ENCODE measurements at regions of chr5 and their contacts with region 1.

Region 1: GRCh38 chr5:81751009-81751835 is at the start of gene SSBP2:
- DNase-seq: peak; percentile 99 to 100 (median 99)
- ATAC-seq: peak; percentile 98
- H3K4me3 ChIP-seq: peak within 1 kb of the TSS; percentile 91
- H3K27ac ChIP-seq: peak within 1 kb of the TSS; percentile 99
- H3K4me1 ChIP-seq: peaks cover 2% of the 10 kb centered on the region
- H3K27me3 ChIP-seq: no peaks in the 10 kb centered on the region
- total RNA-seq, gene SSBP2: 50.6 to 57.8 (median 54.1) TPM

Region 2: DNA sequence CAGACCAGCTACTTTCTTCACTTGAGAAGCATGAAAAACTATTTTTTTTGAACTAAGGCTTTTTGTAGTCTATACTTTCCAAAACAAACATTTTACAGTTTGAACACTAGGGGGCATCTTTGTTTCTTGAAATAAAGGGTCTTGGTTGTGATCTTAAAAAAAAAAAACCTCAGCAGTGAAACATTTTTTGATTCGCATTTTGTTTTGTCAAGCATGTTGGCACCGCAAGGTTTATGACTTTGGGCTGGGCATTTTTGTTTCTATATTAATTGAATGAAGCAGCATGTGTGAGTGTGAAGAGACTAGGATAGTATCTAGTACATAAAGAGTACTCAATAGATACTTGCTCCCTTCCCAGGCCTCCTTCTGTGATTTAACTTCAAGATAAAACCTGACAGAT is 325.7 kb before region 1 on chr5:
- intact Hi-C with region 1: loop called in 1 of 4 experiments (anchors 5 kb)
- DNase-seq: no peak
- ATAC-seq: peak; percentile 56 to 67
- H3K4me3 ChIP-seq: no peak overlapping the region
- H3K27ac ChIP-seq: no peak overlapping the region
- H3K4me1 ChIP-seq: no peaks in the 10 kb centered on the region
- H3K27me3 ChIP-seq: no peaks in the 10 kb centered on the region

Region 3: GRCh38 chr5:81506900-81507588 is 244.2 kb before region 1 on chr5:
- intact Hi-C with region 1: loop called in 3 of 4 experiments (anchors 5 to 10 kb)
- DNase-seq: peak in 2 of 3 donors; percentile 36 to 43
- ATAC-seq: peak; percentile 98
- H3K4me3 ChIP-seq: no peak overlapping the region
- H3K27ac ChIP-seq: no peak overlapping the region
- H3K4me1 ChIP-seq: no peaks in the 10 kb centered on the region
- H3K27me3 ChIP-seq: no peaks in the 10 kb centered on the region

Region 4: DNA sequence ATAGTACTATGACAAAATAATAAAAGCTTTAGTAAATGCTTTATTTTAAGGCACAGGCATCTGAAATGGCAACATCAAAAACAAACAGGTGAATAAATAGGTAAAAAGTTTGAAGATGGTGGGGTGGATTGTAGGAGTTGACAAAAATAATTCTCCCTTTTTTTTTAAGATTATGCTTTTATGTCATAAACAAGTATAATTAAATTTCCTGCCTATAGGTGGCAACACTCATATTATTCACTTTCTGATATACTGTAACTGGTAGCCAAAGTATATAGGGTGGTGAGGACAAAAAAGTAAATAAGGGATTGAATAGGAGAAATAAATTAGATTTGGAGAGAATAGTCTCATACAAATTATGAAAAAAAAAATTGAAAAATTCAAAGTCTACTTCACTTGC is 237.2 kb before region 1 on chr5:
- intact Hi-C with region 1: loop called in 3 of 4 experiments (anchors 5 to 10 kb)
- DNase-seq: no peak
- ATAC-seq: no peak
- H3K4me3 ChIP-seq: no peak overlapping the region
- H3K27ac ChIP-seq: no peak overlapping the region
- H3K4me1 ChIP-seq: no peaks in the 10 kb centered on the region
- H3K27me3 ChIP-seq: no peaks in the 10 kb centered on the region

Region 5: DNA sequence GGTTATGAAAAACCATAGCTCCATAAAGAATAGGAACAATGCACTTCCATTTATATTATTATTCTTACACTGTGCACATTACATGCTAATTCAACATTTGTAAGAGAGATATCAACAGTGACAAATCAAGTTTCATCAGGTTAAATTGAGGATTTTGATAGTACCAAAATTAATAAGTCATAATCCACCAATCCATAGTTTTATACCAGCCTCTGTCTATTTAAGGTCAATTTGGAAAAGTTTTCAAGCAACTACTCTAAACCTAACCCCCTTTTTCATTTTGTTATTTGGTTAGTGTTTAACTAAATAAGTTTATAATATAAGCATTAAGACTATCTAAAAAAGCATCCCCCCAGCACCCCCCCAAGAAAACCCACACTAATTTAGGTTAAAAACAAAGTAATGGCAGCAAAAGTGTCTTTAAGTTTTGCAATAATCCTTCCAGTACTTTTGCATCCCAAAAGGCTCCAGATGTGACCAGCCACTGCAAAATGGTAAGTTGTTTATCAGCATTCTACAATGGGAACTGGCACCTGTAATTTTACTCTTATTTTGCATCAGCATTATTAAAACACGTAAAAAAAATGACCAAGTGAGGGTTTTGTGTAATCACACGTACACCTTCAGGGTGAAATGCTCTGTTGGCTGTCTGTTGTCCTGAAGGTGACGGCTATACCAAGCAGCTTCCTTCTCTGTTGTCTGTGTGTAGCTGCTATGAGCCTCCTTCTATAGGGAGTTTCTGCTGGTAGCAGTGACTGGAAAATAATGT is 36.4 kb after region 1 on chr5:
- intact Hi-C with region 1: loop called in 3 of 4 experiments (anchors 2 to 5 kb)
- DNase-seq: peak in 2 of 3 donors; percentile 48 to 71
- ATAC-seq: peak; percentile 70 to 71
- H3K4me3 ChIP-seq: peak overlapping the region; percentile 34
- H3K27ac ChIP-seq: peak overlapping the region; percentile 56
- H3K4me1 ChIP-seq: peaks cover 2% of the 10 kb centered on the region
- H3K27me3 ChIP-seq: no peaks in the 10 kb centered on the region

Region 6: GRCh38 chr5:82058710-82059109 is 307.5 kb after region 1 on chr5:
- intact Hi-C with region 1: no loop called
- DNase-seq: no peak
- ATAC-seq: no peak
- H3K4me3 ChIP-seq: no peak overlapping the region
- H3K27ac ChIP-seq: no peak overlapping the region
- H3K4me1 ChIP-seq: no peaks in the 10 kb centered on the region
- H3K27me3 ChIP-seq: no peaks in the 10 kb centered on the region

Region 7: GRCh38 chr5:82165740-82166530 is 414.7 kb after region 1 on chr5:
- intact Hi-C with region 1: loop called in 1 of 4 experiments (anchors 10 kb)
- DNase-seq: peak; percentile 69 to 84 (median 73)
- ATAC-seq: peak; percentile 99 to 100
- H3K4me3 ChIP-seq: no peak overlapping the region
- H3K27ac ChIP-seq: no peak overlapping the region
- H3K4me1 ChIP-seq: peaks cover 3% of the 10 kb centered on the region
- H3K27me3 ChIP-seq: no peaks in the 10 kb centered on the region

Measured in right cardiac atrium (tissue), 5 donors.